ENCODE measurements at regions of chr3 and their contacts with region 1.

Region 1: DNA sequence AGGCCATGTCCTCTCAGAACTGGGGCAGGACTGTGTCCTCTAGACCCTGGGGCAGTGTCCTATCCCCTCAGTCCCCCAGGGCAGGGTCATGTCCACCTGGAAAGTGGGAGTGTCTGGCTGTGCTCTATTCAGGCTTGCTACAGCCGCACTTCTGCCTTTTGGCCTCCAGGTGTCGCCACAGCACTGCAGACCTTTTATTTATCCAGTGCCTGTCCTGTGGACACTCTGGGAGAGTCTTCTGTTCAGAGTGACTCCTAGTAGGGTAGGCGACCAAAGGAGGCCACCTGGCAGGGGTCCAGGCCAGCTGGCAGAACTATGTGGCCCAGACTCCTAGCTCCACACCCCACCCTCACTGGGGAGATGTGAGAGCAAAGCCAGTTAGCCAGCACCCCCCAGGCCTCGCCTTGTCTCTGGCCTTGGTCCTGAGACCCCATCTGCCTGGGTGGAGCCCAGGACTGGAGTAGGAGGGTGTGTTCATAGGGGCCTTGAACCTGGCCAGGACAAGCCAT is 3.9 kb downstream of the TMIE start:
- DNase-seq: peak; percentile 86
- H3K4me3 ChIP-seq: no peak overlapping the region
- H3K27ac ChIP-seq: no peak overlapping the region
- H3K4me1 ChIP-seq: peaks cover 0 to 17% (median 16%) of the 10 kb centered on the region in 4 donors
- H3K27me3 ChIP-seq: peaks cover 0 to 18% (median 14%) of the 10 kb centered on the region in 3 donors
- CTCF ChIP-seq: peak; percentile 81 to 96 (median 94)
- EP300 ChIP-seq: no peak
- POLR2A ChIP-seq: no peak

Region 2: GRCh38 chr3:46593274-46593862 is 111.7 kb before region 1 on chr3:
- intact Hi-C with region 1: no loop called
- DNase-seq: no peak
- H3K4me3 ChIP-seq: no peak overlapping the region
- H3K27ac ChIP-seq: no peak overlapping the region
- H3K4me1 ChIP-seq: no peaks in the 10 kb centered on the region
- H3K27me3 ChIP-seq: no peaks in the 10 kb centered on the region
- CTCF ChIP-seq: no peak
- EP300 ChIP-seq: no peak
- POLR2A ChIP-seq: no peak

Region 3: GRCh38 chr3:46845791-46846623 is 140.9 kb after region 1 on chr3:
- intact Hi-C with region 1: loop called (anchors 5 kb)
- DNase-seq: peak; percentile 90
- H3K4me3 ChIP-seq: peak overlapping the region; percentile 36 to 59 (median 55)
- H3K27ac ChIP-seq: peak overlapping the region; percentile 80 to 87 (median 82)
- H3K4me1 ChIP-seq: peaks cover 0 to 27% (median 14%) of the 10 kb centered on the region in 4 donors
- H3K27me3 ChIP-seq: no peaks in the 10 kb centered on the region
- CTCF ChIP-seq: peak; percentile 25 to 67 (median 46)
- EP300 ChIP-seq: no peak
- POLR2A ChIP-seq: no peak

Region 4: GRCh38 chr3:46895204-46895660 is 190.2 kb after region 1 on chr3:
- intact Hi-C with region 1: loop called (anchors 1 kb)
- DNase-seq: peak; percentile 84
- H3K4me3 ChIP-seq: no peak overlapping the region
- H3K27ac ChIP-seq: no peak overlapping the region
- H3K4me1 ChIP-seq: peaks cover 0 to 37% (median 31%) of the 10 kb centered on the region in 4 donors
- H3K27me3 ChIP-seq: peaks cover 12 to 31% (median 14%) of the 10 kb centered on the region in 3 donors
- CTCF ChIP-seq: peak; percentile 89 to 95 (median 92)
- EP300 ChIP-seq: no peak
- POLR2A ChIP-seq: no peak

Region 5: GRCh38 chr3:46998121-46998851 is 293.2 kb after region 1 on chr3:
- intact Hi-C with region 1: loop called (anchors 5 kb)
- DNase-seq: no peak
- H3K4me3 ChIP-seq: no peak overlapping the region
- H3K27ac ChIP-seq: no peak overlapping the region
- H3K4me1 ChIP-seq: no peaks in the 10 kb centered on the region
- H3K27me3 ChIP-seq: no peaks in the 10 kb centered on the region
- CTCF ChIP-seq: peak; percentile 59 to 85 (median 77)
- EP300 ChIP-seq: no peak
- POLR2A ChIP-seq: no peak

Region 6: GRCh38 chr3:47324278-47324865 is 619.3 kb after region 1 on chr3:
- intact Hi-C with region 1: loop called (anchors 2 kb)
- DNase-seq: peak; percentile 74
- H3K4me3 ChIP-seq: no peak overlapping the region
- H3K27ac ChIP-seq: no peak overlapping the region
- H3K4me1 ChIP-seq: peaks cover 0 to 4% (median 2%) of the 10 kb centered on the region in 4 donors
- H3K27me3 ChIP-seq: no peaks in the 10 kb centered on the region
- CTCF ChIP-seq: peak in 3 of 4 experiments; percentile 53 to 69 (median 54)
- EP300 ChIP-seq: no peak
- POLR2A ChIP-seq: no peak

Measured in sigmoid colon (tissue), 7 donors.